ENCODE measurements at regions of chr14 and their contacts with region 1.

Region 1: DNA sequence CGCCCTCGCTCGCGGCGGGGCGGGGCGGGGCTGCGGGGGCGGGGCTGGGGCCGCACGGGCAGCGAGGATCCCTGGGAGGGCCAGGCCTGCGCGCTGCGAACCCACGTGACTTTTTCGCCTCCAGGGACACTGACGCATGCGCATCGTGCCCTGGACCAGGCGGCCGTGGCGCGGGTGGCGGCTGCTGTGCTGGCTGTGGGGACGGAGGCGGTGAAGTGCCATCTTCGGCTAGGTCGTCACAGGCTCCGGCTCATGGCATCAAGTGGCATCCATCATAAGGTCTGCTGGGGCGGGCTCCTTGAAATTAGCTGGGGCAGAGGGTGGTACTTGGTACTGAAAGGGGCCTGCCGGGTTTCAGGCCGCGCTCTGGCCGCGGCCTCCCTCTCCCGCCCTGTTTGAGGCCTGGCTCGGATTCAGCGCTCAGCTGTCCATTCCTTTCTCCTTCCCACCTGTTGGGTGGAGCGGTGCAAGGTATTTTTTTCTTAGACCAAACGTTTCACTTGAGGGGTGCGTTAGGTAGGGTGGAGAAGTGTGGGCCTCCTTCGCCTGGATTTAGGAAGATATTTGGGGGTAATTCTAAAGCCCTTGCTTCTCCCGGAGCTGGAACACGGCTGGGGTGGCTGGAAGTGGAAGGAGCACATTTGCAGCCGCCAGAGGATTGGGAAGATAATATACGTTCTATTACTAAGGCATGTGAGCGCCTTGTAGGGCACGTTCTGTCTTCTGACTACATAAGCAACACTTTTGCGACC is at the start of gene PRPF39:
- DNase-seq: peak; percentile 84 to 98 (median 94)

Region 2: DNA sequence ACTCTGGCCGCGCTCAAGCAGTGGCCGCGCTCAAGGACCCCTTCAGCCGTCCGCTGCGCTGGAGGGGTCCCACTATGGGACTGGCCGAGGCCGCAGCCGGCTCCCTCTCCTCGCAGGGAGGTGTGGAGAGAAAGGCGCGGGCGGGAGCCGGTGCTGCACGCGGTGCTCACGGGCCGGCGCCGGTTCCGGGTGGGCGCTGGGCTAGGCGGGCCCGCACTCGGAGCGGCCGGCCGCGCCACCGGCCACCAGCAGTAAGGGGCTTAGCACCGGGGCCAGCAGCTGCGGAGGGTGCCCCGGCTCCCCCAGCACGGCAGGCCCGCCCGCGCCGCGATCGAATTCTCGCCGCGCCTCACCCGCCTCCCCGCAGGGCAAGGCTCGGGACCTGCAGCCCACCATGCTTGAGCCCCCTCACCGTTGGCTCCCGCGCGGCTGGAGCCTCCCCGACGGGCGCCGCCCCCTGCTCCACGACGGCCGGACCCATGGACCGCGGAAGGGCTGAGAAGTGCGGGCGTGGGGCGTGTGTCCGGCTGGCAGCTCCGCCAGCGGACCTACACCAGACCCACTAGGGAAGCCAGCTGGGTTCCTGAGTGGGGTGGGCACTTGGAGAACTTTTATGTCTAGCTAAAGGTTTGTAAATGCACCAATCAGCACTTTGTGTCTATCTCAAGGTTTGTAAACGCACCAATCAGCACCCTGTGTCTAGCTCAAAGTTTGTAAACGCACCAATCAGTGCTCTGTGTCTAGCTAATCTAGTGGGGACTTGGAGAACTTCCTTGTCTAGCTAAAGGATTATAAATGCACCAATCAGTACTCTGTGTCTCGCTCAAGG is 171.9 kb before region 1 on chr14:
- intact Hi-C with region 1: loop called (anchors 10 kb)
- DNase-seq: peak in 2 of 42 donors; percentile 6

Region 3: GRCh38 chr14:45253068-45253753 is 169.1 kb after region 1 on chr14 and contains the start of gene MIS18BP1:
- intact Hi-C with region 1: loop called (anchors 10 kb)
- DNase-seq: peak; percentile 82 to 97 (median 92)

Measured in head of caudate nucleus (tissue), 42 donors.